Common myeloid progenitor, CD34-positive (primary cell): ENCODE measurements at regions of chr3 and their contacts with region 1.

Region 1: DNA sequence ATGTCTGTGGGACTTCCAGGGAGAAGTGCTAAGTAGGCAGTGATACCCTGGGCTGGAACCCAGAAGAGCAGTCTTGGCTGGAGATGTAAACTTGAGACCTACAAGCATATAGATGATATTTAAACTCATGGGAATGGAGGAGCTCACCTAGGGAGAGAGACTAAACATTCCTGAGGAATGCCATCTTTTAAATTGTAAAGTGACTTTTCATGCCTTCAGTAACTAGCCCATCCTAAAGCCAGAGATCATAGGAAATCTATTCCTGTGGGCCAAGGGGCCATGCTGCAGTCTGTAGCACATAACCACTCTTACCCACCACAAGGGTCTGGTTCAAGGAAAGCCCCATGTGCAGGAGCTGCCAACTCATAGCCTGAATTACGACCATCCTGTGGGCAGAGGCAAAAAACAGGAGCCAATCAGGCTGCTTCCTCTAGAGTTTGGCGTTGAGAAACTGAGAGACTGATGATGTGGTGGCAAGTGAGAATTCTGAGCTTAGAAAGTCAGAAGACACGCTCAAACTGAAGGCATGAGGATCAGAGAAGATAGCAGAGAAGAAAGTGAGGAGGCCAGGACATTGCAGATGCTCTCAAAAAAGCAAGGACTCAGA is 37.5 kb downstream of the CTDSPL start:
- DNase-seq: peak in 2 of 3 donors; percentile 90 to 92
- H3K4me3 ChIP-seq: peak overlapping the region in 1 of 7 experiments; percentile 29
- H3K27ac ChIP-seq: peak overlapping the region; percentile 77 to 90
- H3K4me1 ChIP-seq: peaks cover 22 to 91% (median 52%) of the 10 kb centered on the region in 4 experiments
- H3K27me3 ChIP-seq: no peaks in the 10 kb centered on the region

Region 2: DNA sequence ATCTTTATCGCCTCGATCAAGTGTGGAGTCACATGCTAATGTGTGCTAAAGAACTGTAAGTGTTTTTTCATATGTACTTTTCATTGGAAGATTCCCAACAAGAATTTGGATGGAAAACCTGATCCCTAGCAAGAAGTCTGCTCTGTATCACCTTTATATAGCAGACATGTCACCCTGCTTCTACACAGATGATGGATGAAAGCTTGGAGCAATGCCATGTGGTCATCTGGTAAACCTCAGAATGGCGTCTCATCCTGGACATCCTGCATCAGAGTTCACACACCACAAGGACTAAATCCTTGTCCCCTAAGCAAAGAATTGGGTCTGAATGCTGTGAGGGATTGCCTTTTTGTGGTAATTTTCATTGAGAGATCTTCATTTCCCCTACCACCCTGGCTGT is 79.6 kb before region 1 on chr3:
- CTCF ChIA-PET with region 1: no interaction called
- POLR2A ChIA-PET with region 1: no interaction called
- DNase-seq: no peak
- H3K4me3 ChIP-seq: no peak overlapping the region
- H3K27ac ChIP-seq: no peak overlapping the region
- H3K4me1 ChIP-seq: no peaks in the 10 kb centered on the region
- H3K27me3 ChIP-seq: no peaks in the 10 kb centered on the region

Region 3: DNA sequence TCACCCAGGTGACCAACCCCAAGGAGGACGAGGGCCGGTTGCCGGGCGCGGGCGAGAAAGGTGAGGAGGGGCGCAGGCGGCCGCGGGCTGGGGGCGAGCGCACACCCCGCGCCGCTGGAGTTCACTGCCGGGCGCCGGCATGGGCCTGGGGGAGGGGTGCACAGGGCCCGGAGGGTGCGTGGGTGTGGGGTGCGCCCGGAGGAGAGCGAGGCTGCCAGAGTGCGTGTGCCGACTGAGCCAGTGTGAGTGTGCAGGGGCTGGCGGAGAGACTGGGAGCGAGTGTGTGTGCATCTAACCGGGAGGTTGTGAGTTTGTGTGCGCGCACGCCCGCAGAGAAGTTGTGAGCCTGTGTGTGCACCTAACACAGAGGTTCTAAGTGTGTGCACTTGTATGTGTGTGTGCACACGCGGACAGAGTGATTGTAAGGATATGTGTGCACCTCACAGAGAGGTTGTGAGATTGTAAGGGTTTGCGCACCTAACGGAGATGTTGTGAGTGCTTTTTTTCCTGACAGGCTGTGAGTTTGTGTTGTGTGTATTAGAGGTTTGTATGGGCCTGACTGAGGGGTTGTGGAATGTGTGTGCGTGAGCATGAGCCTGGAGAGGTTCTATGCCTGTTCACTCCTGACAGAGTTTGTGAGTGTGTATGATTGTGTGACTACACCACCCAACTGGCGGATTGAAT is 36.8 kb before region 1 on chr3:
- CTCF ChIA-PET with region 1: interaction called, 12 read pairs
- POLR2A ChIA-PET with region 1: interaction called, 5 read pairs
- DNase-seq: peak; percentile 25 to 75 (median 57)
- H3K4me3 ChIP-seq: peak overlapping the region; percentile 60 to 92 (median 77)
- H3K27ac ChIP-seq: no peak overlapping the region
- H3K4me1 ChIP-seq: peaks cover 0 to 43% (median 34%) of the 10 kb centered on the region in 4 experiments
- H3K27me3 ChIP-seq: no peaks in the 10 kb centered on the region

Region 4: DNA sequence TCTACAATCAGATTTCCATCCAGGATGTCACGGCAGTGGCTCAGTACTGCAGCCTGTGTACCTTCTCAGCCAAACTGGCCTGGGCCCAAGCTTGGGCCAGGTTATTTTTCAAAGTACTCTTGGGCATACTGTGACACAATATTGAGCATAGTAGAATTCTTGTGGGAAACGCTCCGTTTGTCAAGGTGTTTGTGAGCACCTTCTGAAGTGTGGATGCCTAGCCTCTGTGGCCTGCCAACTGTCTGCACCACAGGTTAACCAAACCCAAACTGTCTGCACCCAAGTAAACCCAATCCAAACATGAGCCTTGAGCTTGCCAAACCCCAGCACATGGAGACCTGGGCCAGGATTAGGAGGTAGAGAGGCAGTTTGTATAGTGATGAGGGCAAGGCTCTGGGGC is 12.1 kb before region 1 on chr3:
- CTCF ChIA-PET with region 1: interaction called, 11 read pairs
- POLR2A ChIA-PET with region 1: no interaction called
- DNase-seq: no peak
- H3K4me3 ChIP-seq: no peak overlapping the region
- H3K27ac ChIP-seq: no peak overlapping the region
- H3K4me1 ChIP-seq: peaks cover 25 to 56% (median 34%) of the 10 kb centered on the region in 4 experiments
- H3K27me3 ChIP-seq: no peaks in the 10 kb centered on the region